ENCODE measurements at regions of chr1 and their contacts with region 1.

Region 1: GRCh38 chr1:118578276-118578675 is 393.2 kb upstream of the SPAG17 start:
- DNase-seq: no peak
- H3K4me3 Mint-ChIP-seq: no peak overlapping the region
- H3K27ac Mint-ChIP-seq: no peak overlapping the region
- H3K4me1 Mint-ChIP-seq: no peaks in the 10 kb centered on the region
- H3K27me3 Mint-ChIP-seq: no peaks in the 10 kb centered on the region
- CTCF ChIP-seq: no peak

Region 2: DNA sequence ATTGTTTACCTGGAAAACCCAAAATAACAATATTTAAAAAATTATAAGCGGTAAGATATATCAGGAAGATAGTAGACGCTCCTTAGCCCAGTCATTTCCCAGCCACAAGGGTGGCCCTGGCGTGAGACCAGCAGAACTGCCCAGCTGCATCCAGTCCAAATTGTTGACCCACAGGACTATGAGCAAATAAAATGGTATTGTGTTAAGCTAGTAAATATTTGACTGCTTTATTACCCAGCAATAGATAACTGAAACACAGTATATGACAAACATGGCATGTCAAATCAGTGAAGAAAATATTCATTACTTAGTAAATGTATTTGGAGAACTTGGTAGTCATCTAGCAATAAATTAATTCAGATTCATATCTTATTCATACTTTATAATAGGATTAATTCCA is 98.9 kb before region 1 on chr1:
- CTCF ChIA-PET with region 1: no interaction called
- POLR2A ChIA-PET with region 1: no interaction called
- intact Hi-C with region 1: no loop called
- DNase-seq: no peak
- H3K4me3 Mint-ChIP-seq: no peak overlapping the region
- H3K27ac Mint-ChIP-seq: no peak overlapping the region
- H3K4me1 Mint-ChIP-seq: no peaks in the 10 kb centered on the region
- H3K27me3 Mint-ChIP-seq: no peaks in the 10 kb centered on the region
- CTCF ChIP-seq: no peak

Region 3: DNA sequence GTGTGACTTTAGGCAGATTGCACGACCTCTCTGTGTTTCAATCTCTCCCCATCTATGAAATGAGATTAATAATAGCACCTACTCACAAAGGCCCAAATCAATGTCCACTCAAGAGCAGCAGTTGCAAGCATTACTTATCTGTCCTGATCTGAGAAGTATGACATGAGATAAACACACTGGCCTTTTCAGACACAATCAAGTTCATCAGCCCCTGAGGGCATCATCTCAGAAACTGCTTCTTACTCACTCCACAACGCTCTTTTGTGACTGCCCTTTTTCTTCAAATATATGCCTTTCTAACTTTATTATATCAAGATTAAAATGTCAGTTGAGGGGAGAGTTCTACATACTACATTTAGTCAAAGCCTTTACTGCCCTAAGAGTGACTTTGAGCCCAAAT is 21.4 kb before region 1 on chr1:
- CTCF ChIA-PET with region 1: no interaction called
- POLR2A ChIA-PET with region 1: no interaction called
- intact Hi-C with region 1: no loop called
- DNase-seq: no peak
- H3K4me3 Mint-ChIP-seq: no peak overlapping the region
- H3K27ac Mint-ChIP-seq: no peak overlapping the region
- H3K4me1 Mint-ChIP-seq: no peaks in the 10 kb centered on the region
- H3K27me3 Mint-ChIP-seq: no peaks in the 10 kb centered on the region
- CTCF ChIP-seq: no peak

Region 4: GRCh38 chr1:118589238-118589846 is 11.1 kb after region 1 on chr1:
- CTCF ChIA-PET with region 1: no interaction called
- POLR2A ChIA-PET with region 1: no interaction called
- intact Hi-C with region 1: no loop called
- DNase-seq: no peak
- H3K4me3 Mint-ChIP-seq: no peak overlapping the region
- H3K27ac Mint-ChIP-seq: no peak overlapping the region
- H3K4me1 Mint-ChIP-seq: no peaks in the 10 kb centered on the region
- H3K27me3 Mint-ChIP-seq: no peaks in the 10 kb centered on the region
- CTCF ChIP-seq: no peak

Region 5: GRCh38 chr1:118627435-118627834 is 49.2 kb after region 1 on chr1:
- CTCF ChIA-PET with region 1: no interaction called
- POLR2A ChIA-PET with region 1: no interaction called
- intact Hi-C with region 1: loop called (anchors 1 kb)
- DNase-seq: peak; percentile 34
- H3K4me3 Mint-ChIP-seq: no peak overlapping the region
- H3K27ac Mint-ChIP-seq: no peak overlapping the region
- H3K4me1 Mint-ChIP-seq: peaks cover 8% of the 10 kb centered on the region
- H3K27me3 Mint-ChIP-seq: no peaks in the 10 kb centered on the region
- CTCF ChIP-seq: no peak

Measured in MCF 10A (cell line).